MCF 10A (cell line): ENCODE measurements at regions of chr4 and their contacts with region 1.

Region 1: DNA sequence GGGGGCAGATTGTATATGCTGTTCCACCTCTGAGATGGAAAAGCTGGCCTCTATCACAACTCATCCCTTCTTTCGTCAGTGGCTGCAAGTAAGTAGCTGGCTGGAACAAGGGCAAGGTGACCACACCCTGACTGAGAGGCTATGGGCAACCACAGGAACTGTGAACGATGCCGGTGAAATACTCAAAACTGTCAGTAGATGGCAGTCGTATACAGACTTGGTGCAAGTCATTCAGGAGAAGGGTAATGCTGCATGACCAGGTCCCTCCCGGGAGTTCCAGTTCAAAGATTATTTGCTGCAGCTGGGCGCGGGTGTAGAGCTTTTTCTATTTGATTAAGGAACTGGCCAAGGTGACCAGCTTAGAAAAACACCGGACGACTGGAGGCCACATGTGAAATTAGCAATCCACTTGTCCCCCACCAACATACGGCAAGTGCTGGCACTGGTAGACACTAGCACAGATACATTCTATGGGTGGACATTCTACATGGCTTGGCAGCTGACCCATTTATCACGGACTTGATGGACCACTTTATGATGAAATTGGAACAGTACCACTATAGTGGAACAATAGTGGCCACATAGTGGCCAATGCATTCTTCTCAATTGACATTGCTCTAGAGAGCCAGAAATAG is 726.7 kb downstream of the TRAM1L1 start:
- DNase-seq: peak; percentile 87
- H3K4me3 Mint-ChIP-seq: no peak overlapping the region
- H3K27ac Mint-ChIP-seq: no peak overlapping the region
- H3K4me1 Mint-ChIP-seq: peaks cover 7% of the 10 kb centered on the region
- H3K27me3 Mint-ChIP-seq: no peaks in the 10 kb centered on the region
- CTCF ChIP-seq: peak; percentile 80

Region 2: DNA sequence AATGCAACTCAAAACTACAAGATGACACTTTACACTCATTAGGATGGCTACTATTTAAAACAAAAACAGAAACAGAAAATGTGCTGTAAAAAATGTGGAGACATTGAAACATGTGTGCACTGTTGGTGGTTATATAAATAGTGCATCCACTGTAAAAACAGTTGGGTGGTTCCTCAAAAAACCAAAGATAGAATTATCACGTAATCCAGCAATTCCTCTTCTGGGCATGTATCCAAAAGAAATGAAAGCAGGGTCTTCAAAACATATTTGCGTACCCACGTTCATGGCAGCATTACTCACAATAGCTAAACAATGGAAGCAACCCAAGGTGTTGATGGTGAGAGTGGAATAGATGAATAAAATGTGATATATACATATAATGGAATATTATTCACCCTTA is 240.5 kb before region 1 on chr4:
- CTCF ChIA-PET with region 1: no interaction called
- POLR2A ChIA-PET with region 1: no interaction called
- intact Hi-C with region 1: no loop called
- DNase-seq: no peak
- H3K4me3 Mint-ChIP-seq: no peak overlapping the region
- H3K27ac Mint-ChIP-seq: no peak overlapping the region
- H3K4me1 Mint-ChIP-seq: peaks cover 6% of the 10 kb centered on the region
- H3K27me3 Mint-ChIP-seq: no peaks in the 10 kb centered on the region
- CTCF ChIP-seq: no peak

Region 3: GRCh38 chr4:116180157-116180601 is 178.5 kb before region 1 on chr4:
- CTCF ChIA-PET with region 1: interaction called, 7 read pairs
- POLR2A ChIA-PET with region 1: no interaction called
- intact Hi-C with region 1: loop called (anchors 5 kb)
- DNase-seq: peak; percentile 46
- H3K4me3 Mint-ChIP-seq: no peak overlapping the region
- H3K27ac Mint-ChIP-seq: no peak overlapping the region
- H3K4me1 Mint-ChIP-seq: no peaks in the 10 kb centered on the region
- H3K27me3 Mint-ChIP-seq: peaks cover 15% of the 10 kb centered on the region
- CTCF ChIP-seq: peak; percentile 52

Region 4: DNA sequence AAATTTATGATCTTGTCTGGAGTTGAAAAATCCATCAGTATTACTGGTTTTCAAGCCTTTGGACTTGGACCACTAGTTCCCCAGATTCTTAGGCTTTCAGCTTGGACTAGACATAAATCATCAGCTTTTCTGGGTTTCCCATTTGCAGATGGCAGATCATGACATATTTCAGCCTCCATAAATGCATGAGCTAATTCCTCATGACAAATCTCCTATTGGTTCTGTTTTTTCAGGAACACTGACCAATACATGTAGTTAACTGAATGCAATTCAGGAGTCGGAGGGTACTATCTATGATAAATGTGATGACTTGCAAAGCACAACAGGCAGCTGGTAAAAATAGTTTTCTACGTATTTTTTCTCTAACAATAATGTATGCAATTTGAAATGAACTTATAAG is 91.1 kb after region 1 on chr4:
- CTCF ChIA-PET with region 1: interaction called, 3 read pairs
- POLR2A ChIA-PET with region 1: no interaction called
- intact Hi-C with region 1: loop called (anchors 2 kb)
- DNase-seq: no peak
- H3K4me3 Mint-ChIP-seq: no peak overlapping the region
- H3K27ac Mint-ChIP-seq: no peak overlapping the region
- H3K4me1 Mint-ChIP-seq: no peaks in the 10 kb centered on the region
- H3K27me3 Mint-ChIP-seq: no peaks in the 10 kb centered on the region
- CTCF ChIP-seq: no peak

Region 5: GRCh38 chr4:116489739-116490138 is 131.0 kb after region 1 on chr4:
- CTCF ChIA-PET with region 1: no interaction called
- POLR2A ChIA-PET with region 1: no interaction called
- intact Hi-C with region 1: no loop called
- DNase-seq: no peak
- H3K4me3 Mint-ChIP-seq: no peak overlapping the region
- H3K27ac Mint-ChIP-seq: no peak overlapping the region
- H3K4me1 Mint-ChIP-seq: no peaks in the 10 kb centered on the region
- H3K27me3 Mint-ChIP-seq: peaks cover 24% of the 10 kb centered on the region
- CTCF ChIP-seq: no peak

Region 6: GRCh38 chr4:116702951-116703350 is 344.2 kb after region 1 on chr4:
- CTCF ChIA-PET with region 1: interaction called, 12 read pairs
- POLR2A ChIA-PET with region 1: no interaction called
- intact Hi-C with region 1: loop called (anchors 1 kb)
- DNase-seq: peak; percentile 17
- H3K4me3 Mint-ChIP-seq: no peak overlapping the region
- H3K27ac Mint-ChIP-seq: no peak overlapping the region
- H3K4me1 Mint-ChIP-seq: no peaks in the 10 kb centered on the region
- H3K27me3 Mint-ChIP-seq: peaks cover 7% of the 10 kb centered on the region
- CTCF ChIP-seq: no peak

Region 7: DNA sequence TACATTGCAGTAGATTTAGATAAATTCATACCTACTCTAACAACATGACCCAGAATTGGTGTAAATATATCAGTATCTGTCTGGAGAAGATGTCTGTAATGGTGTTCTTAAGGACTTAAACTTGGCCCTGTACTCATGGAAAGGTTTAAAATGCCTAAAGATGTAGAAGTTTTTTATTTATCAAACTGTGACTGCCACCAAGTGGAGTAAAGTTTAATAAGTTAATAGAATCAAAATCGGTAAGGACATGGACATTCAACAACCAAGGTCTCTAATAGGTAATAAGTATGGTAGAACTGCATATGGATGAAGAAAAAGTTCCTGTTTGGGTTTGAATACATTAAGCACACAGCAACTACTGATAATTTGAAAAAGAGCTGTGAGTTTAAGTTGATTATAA is 1201.6 kb after region 1 on chr4:
- CTCF ChIA-PET with region 1: interaction called, 28 read pairs
- POLR2A ChIA-PET with region 1: no interaction called
- intact Hi-C with region 1: loop called (anchors 1 kb)
- DNase-seq: peak; percentile 45
- H3K4me3 Mint-ChIP-seq: no peak overlapping the region
- H3K27ac Mint-ChIP-seq: no peak overlapping the region
- H3K4me1 Mint-ChIP-seq: no peaks in the 10 kb centered on the region
- H3K27me3 Mint-ChIP-seq: no peaks in the 10 kb centered on the region
- CTCF ChIP-seq: peak; percentile 18

Region 8: GRCh38 chr4:118034053-118034785 is 1675.5 kb after region 1 on chr4 and contains the start of gene NDST3:
- CTCF ChIA-PET with region 1: interaction called, 9 read pairs
- POLR2A ChIA-PET with region 1: no interaction called
- intact Hi-C with region 1: loop called (anchors 1 kb)
- DNase-seq: peak; percentile 88
- H3K4me3 Mint-ChIP-seq: peak within 1 kb of the TSS; percentile 64
- H3K27ac Mint-ChIP-seq: no peak within 1 kb of the TSS
- H3K4me1 Mint-ChIP-seq: no peaks in the 10 kb centered on the region
- H3K27me3 Mint-ChIP-seq: peaks cover 4% of the 10 kb centered on the region
- CTCF ChIP-seq: peak; percentile 63
- total RNA-seq, gene NDST3: not detected in 2 replicates

Region 9: DNA sequence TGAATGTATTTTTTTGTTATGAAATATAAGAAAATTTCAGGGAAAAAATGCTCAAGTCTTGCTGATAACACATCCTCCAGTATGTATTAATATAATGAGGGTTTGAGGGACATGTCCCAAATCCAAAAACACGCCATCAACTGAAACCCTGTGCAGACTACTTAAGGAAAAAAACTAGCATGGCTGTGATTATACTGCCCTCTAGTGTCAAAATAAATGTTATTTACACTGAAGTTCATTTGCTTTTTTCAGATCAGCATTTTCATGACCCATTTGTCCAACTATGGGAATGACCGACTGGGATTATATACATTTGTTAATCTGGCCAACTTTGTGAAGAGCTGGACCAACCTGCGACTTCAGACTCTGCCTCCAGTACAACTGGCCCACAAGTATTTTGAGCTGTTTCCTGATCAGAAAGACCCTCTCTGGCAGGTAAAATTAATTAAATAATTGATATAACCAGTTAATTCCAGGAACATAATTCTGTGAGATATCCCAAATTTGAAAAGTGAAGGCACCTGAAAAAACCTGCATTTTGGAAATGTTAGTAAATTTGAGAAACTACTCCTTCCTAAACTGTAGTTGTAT is 1865.6 kb after region 1 on chr4:
- CTCF ChIA-PET with region 1: interaction called, 3 read pairs
- POLR2A ChIA-PET with region 1: no interaction called
- intact Hi-C with region 1: loop called (anchors 2 kb)
- DNase-seq: peak; percentile 75
- H3K4me3 Mint-ChIP-seq: no peak overlapping the region
- H3K27ac Mint-ChIP-seq: no peak overlapping the region
- H3K4me1 Mint-ChIP-seq: no peaks in the 10 kb centered on the region
- H3K27me3 Mint-ChIP-seq: no peaks in the 10 kb centered on the region
- CTCF ChIP-seq: peak; percentile 70